ENCODE measurements at regions of chr16 and their contacts with region 1.

Region 1: DNA sequence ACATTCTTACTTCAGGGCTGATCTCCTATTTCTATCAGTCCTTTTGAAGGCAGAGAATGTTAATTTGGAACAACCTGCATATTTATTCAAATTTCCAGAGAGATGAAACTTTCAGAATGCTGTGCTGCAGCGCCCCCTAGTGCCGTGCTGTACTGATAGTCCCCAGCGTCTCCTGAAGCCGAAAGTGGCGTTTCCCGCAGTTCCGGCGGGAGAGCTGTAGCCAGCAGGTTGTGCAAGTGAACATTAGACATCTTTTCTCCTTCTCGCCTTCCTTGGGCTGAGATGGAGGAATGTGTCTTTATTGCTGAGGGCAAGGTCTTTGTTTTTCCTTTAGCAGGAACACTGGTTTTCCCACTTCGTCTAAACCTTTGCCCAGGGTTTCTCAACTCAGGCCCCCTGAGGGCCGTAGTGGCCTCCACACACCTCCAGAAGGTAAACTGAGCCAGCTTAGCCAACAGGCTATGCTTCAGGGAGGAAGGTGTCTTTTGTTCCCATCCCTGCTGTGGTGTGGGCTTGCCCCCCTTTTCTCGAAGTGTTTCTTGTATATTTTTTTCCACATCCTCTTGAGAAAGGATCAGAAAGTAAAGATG is 26.4 kb downstream of the USP10 start:
- DNase-seq: peak; percentile 93 to 98
- ATAC-seq: peak; percentile 91
- H3K4me3 ChIP-seq: no peak overlapping the region
- H3K27ac ChIP-seq: no peak overlapping the region
- H3K4me1 ChIP-seq: peaks cover 0 to under 1% of the 10 kb centered on the region in 2 donors
- H3K27me3 ChIP-seq: no peaks in the 10 kb centered on the region

Region 2: GRCh38 chr16:84511180-84511824 is 214.9 kb before region 1 on chr16:
- intact Hi-C with region 1: loop called (anchors 5 kb)
- DNase-seq: peak; percentile 88 to 96
- ATAC-seq: peak; percentile 82
- H3K4me3 ChIP-seq: no peak overlapping the region
- H3K27ac ChIP-seq: no peak overlapping the region
- H3K4me1 ChIP-seq: no peaks in the 10 kb centered on the region
- H3K27me3 ChIP-seq: no peaks in the 10 kb centered on the region

Region 3: GRCh38 chr16:84672276-84673202 is 53.6 kb before region 1 on chr16:
- intact Hi-C with region 1: loop called (anchors 1 to 2 kb)
- DNase-seq: peak; percentile 87 to 94
- ATAC-seq: peak; percentile 86
- H3K4me3 ChIP-seq: no peak overlapping the region
- H3K27ac ChIP-seq: no peak overlapping the region
- H3K4me1 ChIP-seq: no peaks in the 10 kb centered on the region
- H3K27me3 ChIP-seq: no peaks in the 10 kb centered on the region